Cardiac septum (tissue), 1 donor: ENCODE measurements at regions of chr2 and their contacts with region 1.

Region 1: DNA sequence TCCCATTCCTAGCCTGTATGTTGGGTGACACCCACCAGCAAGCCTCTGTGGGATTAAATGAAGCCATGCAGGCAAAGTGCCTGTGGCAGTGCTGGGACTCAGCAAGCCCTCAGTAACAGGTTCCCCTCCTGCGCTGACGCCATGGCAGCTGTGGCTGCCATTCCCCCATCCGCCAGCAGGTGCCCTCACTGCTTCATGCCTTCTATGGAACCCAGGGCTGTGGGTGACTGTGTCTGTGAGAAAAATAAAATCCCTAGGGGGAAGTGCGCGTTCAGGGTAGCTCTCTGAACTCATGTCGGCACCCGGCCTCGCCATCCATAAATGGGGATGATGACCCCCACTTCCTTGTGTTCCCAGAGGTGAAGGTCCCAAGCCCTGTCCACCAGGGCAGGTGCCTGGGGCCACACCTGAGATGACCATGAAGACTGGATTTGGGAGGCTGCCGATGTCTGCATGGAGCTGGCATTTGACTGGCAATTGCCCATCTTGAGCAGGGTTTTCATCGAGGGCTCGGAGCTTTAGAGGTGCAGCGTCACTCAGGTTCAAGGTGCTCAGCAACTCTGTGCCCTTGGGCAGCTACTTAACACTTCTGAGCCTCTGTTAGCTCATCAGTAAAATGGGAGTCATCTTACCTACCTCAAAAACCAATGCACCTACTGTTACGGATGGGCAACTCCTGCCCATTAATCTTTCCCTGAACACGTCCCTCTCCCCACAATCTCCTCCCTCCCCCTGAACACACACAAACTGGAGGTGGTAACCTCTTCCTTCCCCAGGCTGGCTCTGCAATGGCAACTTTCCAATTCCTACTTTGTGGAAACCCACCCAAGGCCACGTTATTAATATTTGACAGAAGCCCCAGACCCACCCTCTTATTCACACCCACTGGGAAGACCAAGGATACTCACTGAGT is 2.9 kb upstream of the MAL start:
- DNase-seq: no peak

Region 2: DNA sequence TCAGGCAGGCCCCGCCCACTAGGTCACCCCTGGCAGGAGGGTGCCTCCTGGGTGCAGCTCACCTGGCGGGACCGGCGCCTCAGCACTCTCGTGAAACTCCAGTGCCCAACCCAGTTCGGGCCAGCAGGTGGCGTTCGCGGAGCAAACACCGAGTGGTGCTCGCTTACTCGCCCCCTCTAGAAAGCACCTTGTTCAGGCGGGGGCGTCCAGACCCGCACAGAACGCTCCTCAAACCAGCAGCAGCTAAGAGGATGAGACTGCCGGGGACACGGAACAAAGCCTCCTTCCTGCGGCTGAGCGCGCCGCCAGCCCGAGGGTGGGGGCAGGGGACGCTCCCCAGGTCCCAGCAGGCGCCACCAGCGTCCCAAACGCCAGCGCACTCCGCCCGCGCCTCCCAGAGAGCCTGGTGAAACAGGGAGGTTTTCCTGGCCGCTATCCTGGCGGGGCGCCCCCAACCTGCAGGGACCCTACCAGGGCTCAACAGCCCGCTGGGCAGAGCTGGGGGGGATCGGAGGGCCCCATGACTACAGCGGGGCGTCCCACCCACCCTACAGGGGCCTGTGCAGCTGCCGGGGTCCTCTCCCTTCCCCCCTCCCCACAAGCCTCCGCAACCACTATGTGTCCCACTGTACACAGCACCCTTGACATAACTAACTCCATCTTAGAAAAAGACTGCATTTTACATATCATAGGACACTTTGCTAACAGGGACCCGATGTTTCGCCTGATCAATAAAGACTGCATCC is 54.4 kb after region 1 on chr2:
- intact Hi-C with region 1: loop called (anchors 5 kb)
- DNase-seq: peak; percentile 85

Region 3: DNA sequence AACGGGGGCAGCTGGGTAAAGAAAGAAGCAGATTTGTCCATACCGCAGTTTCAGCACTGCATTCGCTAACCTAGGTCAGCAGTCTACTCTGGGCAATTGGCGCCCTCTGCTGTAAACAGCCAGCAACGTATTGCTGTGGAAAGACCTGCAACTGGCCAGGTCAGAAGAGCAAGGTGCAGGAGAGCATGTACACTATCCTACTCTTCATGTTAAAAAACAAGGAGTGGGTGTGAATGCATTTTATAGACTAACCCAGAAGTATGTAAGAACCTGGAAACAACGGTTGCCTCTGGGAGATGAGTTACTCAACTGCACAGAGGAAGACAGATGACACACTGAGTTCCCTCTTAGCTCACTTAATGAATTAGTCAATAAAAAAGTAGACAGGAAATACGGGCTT is 92.9 kb after region 1 on chr2:
- intact Hi-C with region 1: loop called (anchors 1 kb)
- DNase-seq: peak; percentile 85